ENCODE measurements at regions of chr2 and their contacts with region 1.

Region 1: DNA sequence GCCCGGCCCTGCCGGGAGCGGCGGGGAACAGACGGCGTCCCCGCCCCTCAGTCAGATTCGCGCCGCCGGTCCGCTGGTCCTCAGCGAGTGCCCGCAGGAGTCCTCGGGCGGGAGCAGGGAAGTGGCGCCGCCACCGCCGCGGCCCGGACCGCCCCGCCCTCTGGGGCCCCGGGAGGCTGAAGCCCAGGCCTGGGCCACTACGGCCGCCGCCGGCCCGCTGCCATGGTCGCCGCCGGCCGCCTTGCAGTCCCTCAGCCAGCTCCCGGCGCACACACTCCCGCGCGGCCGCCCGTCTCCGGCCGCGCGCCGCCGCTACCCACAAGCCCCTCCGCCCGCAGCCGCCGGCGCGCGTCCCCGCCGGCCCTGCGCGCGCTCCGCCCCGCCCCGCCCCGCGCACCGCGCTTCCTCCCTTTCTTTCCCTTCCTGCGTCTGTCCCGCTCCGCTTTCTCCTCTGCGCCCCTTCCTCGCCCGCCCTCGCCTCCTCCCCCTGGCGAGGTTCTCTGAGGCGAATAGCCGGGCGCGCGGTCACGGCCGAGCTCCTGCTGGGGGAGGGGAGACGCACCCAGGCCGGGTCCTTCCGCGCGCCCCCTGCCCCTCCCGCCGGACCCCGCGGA is at the start of gene ROCK2:
- DNase-seq: peak; percentile 94
- ATAC-seq: peak; percentile 87
- total RNA-seq, gene ROCK2: 34.4 TPM

Region 2: DNA sequence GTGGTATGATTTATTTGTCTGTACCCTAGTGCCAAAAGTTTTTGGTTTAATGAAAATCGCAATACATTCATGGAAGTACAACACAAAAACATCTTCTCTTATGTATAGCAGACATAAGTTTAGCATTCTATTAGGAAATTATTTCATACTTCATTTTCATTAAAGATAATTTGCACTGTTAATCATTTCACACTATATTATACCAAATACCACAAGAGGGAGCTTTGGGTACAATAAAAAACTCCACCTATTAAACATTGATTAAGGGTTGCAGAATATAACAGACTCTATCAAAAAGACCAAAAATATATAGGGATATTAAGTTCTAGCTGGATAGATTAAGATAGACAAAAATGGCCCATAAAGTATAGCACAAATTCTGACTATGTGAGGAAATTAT is 110.1 kb before region 1 on chr2:
- intact Hi-C with region 1: loop called (anchors 5 kb)
- DNase-seq: no peak
- ATAC-seq: no peak

Region 3: GRCh38 chr2:11292464-11293255 is 51.8 kb before region 1 on chr2:
- intact Hi-C with region 1: loop called (anchors 5 kb)
- DNase-seq: no peak
- ATAC-seq: peak; percentile 13

Region 4: GRCh38 chr2:11303290-11304013 is 41.0 kb before region 1 on chr2:
- intact Hi-C with region 1: no loop called
- DNase-seq: no peak
- ATAC-seq: no peak

Region 5: DNA sequence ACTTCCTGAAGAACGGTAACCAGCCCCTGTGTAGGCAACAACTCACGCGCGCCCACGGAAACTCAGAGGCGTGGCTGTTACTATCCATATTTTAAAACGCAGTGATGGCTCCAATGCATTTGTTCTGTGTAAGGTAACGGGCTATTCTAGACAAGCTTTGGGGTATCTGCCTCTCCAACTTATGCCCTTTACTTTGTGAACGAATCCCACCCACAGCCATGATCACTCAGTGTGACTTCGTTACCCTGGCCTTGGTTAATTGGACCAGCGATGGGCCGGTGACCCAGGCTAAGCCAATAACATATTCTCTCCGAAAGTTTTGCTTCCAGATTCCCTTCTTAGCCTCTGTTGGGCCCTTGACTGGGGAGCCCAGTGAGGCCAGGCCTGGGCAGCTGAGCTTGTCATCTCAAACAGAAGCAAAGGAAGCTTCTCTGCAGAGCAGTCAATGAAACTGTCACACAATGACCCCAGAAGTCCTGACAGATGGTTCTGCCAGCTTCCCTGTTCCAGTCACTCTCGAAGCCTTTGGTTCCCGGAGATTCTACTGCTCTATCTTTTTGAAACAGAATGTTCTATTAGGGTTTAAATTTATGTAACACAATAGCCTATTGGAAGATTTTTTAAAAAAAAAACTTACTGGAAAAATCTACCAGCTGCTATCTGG is 30.7 kb after region 1 on chr2:
- intact Hi-C with region 1: loop called (anchors 2 kb)
- DNase-seq: no peak
- ATAC-seq: peak; percentile 26

Region 6: DNA sequence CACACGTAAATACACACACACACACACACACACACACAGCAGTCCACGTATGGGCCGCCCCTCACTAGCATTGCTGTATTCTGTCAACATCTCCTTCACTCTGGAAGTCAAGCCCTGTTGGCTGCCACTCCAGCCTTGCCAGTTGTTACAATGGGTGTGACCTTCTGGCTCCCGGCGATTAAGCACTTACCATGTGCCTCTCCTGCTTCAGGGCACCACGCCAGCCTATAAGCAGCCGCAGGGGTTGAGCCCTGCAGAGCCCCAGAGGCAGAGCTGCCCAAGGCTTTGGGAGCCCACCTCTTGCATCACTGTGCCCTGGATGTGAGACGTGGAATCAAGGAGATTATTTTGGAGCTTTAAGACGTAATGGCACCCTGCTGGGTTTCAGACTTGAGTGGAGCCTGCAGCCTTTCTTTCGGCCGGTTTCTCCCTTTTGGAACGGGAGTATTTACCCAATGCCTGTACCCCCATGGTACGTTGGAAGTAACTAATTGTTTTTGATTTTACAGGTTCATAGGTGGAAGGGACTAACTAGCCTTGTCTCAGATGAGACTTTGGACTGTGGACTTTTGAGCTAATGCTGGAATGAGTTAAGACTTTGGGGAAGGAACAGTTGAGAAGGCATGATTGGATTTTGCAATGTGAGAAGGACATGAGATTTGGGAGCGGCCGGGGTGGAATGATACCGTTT is 54.4 kb after region 1 on chr2:
- intact Hi-C with region 1: loop called (anchors 5 kb)
- DNase-seq: peak; percentile 82
- ATAC-seq: peak; percentile 69

Region 7: GRCh38 chr2:11411768-11412448 is 67.5 kb after region 1 on chr2:
- intact Hi-C with region 1: loop called (anchors 2 kb)
- DNase-seq: no peak
- ATAC-seq: peak; percentile 62

Measured in Right ventricle myocardium inferior (tissue), 1 donor.